ENCODE measurements at regions of chr3 and their contacts with region 1.

Region 1: DNA sequence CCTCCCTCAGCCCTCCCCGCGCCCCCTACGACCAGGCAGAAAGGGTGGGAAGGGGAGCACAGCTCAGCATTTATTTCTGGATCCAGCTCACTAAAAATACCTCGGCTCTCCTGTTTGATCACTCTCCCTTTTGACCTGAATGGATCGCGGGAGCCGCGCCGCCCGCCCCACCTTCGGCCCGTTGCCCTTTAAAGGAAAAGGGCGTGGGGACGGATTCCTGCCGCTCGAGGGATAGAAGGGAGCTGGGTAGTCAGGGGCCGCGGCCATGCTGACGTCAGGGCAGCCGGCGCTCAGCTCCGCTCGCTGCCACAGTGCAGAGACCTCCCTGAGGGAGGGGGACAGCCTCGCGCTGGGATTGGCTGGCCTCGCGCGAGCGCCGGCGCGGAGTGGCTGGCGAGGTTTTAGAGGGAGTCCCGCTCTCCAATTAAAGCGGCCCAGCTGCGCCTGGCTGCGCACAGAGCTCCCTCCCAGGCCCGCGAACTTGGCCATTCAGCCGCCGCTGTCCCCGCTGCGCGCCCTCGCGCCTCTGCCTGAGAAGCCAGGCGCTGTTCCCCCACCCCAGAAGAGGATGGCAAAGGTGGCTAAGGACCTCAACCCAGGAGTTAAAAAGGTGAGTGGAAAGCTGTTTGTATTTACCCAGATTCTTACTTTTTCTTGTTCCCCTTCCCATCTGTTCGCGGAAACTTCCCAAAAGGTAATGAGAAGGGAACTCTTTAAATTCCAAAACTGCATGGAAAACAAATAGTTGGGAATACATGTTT is at the start of gene LMCD1:
- H3K4me3 ChIP-seq: peak within 1 kb of the TSS; percentile 38
- H3K27ac ChIP-seq: peak within 1 kb of the TSS; percentile 88
- H3K4me1 ChIP-seq: peaks cover 42% of the 10 kb centered on the region
- CTCF ChIP-seq: peak; percentile 7; the same call in 1 of the 2 replicates

Region 2: GRCh38 chr3:8423307-8423706 is 78.2 kb before region 1 on chr3:
- CTCF ChIA-PET with region 1: no interaction called
- POLR2A ChIA-PET with region 1: no interaction called
- H3K4me3 ChIP-seq: no peak overlapping the region
- H3K27ac ChIP-seq: no peak overlapping the region
- H3K4me1 ChIP-seq: no peaks in the 10 kb centered on the region
- CTCF ChIP-seq: no peak

Region 3: GRCh38 chr3:8464668-8465067 is 36.9 kb before region 1 on chr3:
- CTCF ChIA-PET with region 1: no interaction called
- POLR2A ChIA-PET with region 1: no interaction called
- H3K4me3 ChIP-seq: no peak overlapping the region
- H3K27ac ChIP-seq: no peak overlapping the region
- H3K4me1 ChIP-seq: no peaks in the 10 kb centered on the region
- CTCF ChIP-seq: no peak

Region 4: GRCh38 chr3:8482960-8483665 is 18.4 kb before region 1 on chr3:
- CTCF ChIA-PET with region 1: interaction called, 6 read pairs
- POLR2A ChIA-PET with region 1: interaction called, 12 read pairs
- H3K4me3 ChIP-seq: no peak overlapping the region
- H3K27ac ChIP-seq: no peak overlapping the region
- H3K4me1 ChIP-seq: peaks cover 12% of the 10 kb centered on the region
- CTCF ChIP-seq: no peak

Region 5: GRCh38 chr3:8490079-8490552 is 11.4 kb before region 1 on chr3:
- CTCF ChIA-PET with region 1: interaction called, 8 read pairs
- POLR2A ChIA-PET with region 1: interaction called, 18 read pairs
- H3K4me3 ChIP-seq: no peak overlapping the region
- H3K27ac ChIP-seq: no peak overlapping the region
- H3K4me1 ChIP-seq: peaks cover 10% of the 10 kb centered on the region
- CTCF ChIP-seq: no peak